Endothelial cell of umbilical vein (primary cell): ENCODE measurements at regions of chr19 and their contacts with region 1.

Region 1: DNA sequence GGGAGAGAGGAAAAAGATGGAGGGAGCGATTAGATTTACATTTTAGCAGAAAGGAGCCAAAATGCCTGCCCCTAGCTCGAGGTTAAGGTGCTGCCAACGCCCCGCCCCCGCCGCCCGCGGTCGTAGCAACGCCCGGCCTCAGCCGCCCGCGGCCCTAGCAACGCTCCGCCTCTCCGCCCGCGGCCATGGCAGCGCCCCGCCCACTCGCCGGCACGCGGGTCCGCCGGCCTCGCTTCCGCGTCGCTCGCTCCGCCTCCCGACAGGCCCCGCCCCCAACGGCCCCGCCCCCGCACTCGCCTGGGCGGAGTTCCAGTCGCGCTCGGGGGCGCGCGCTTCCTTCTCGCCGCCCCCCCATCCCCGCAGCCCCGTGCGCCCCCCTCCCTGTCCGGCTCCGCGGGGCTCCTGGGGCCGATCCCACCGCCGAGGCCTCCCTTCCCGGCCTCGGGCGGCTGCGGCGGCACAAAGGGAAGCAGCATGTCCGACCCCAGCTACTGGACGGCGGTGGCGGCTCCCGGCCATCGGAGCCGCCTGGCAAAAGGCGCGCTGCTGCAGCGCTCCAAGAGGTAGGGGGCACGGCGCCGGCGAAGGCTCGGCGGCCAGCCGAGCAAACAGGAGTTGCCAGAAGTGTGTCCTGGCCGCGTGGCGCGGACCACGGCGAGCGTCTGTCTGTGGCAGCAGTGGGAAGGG is 20.3 kb downstream of the MAST3 start:
- DNase-seq: peak; percentile 83
- H3K4me3 ChIP-seq: peak overlapping the region; percentile 33 to 63 (median 51)
- H3K27ac ChIP-seq: no peak overlapping the region
- H3K4me1 ChIP-seq: peaks cover 10% of the 10 kb centered on the region
- H3K27me3 ChIP-seq: no peaks in the 10 kb centered on the region
- CTCF ChIP-seq: peak in 1 of 2 donors; percentile 32
- POLR2A ChIP-seq: no peak

Region 2: GRCh38 chr19:17915951-17916593 is 201.8 kb before region 1 on chr19:
- CTCF ChIA-PET with region 1: no interaction called
- POLR2A ChIA-PET with region 1: no interaction called
- dilution Hi-C with region 1: no loop called
- intact Hi-C with region 1: no loop called
- DNase-seq: no peak
- H3K4me3 ChIP-seq: no peak overlapping the region
- H3K27ac ChIP-seq: no peak overlapping the region
- H3K4me1 ChIP-seq: no peaks in the 10 kb centered on the region
- H3K27me3 ChIP-seq: no peaks in the 10 kb centered on the region
- CTCF ChIP-seq: no peak
- POLR2A ChIP-seq: no peak

Region 3: DNA sequence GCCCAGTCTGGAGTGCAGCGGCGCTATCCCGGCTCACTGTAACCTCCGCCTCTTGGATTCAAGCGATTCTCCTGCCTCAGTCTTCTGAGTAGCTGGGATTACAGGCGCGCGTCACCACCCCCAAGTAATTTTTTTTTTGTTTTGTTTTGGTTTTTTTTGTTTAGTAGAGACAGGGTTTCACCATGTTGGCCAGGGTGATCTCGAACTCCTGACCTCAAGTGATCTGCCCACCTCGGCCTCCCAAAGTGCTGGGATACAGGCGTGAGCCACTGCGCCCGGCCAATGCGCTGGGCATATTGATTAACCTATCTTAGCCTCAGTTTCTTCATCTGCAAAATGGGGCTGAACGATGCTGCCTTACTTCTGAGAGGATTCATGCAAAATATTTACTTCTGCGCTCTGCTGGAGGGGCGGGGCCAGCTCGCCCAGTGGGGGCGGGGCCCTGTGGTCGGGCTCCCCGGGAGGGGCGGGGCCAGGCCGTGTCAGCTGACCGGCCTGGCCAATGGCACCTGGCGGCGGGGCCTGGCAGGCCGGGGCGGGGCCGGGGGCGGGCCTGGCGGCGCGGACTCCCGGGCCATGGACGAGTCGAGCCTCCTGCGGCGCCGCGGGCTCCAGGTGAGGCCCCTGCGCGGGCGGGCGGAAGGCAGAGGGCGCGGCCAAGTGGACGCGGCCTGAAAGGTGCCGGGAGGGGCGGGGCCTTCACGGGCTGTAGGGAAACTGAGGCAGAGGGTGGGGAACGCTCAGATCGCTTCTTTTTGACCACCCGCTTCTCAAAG is 20.4 kb before region 1 on chr19 and contains the start of gene MAST3:
- CTCF ChIA-PET with region 1: interaction called, 22 read pairs
- POLR2A ChIA-PET with region 1: no interaction called
- dilution Hi-C with region 1: no loop called
- intact Hi-C with region 1: no loop called
- DNase-seq: peak; percentile 66
- H3K4me3 ChIP-seq: peak within 1 kb of the TSS; percentile 24 to 54 (median 28)
- H3K27ac ChIP-seq: no peak within 1 kb of the TSS
- H3K4me1 ChIP-seq: peaks cover 5% of the 10 kb centered on the region
- H3K27me3 ChIP-seq: peaks cover 19 to 20% of the 10 kb centered on the region in 2 experiments
- CTCF ChIP-seq: no peak
- POLR2A ChIP-seq: no peak
- total RNA-seq, gene MAST3: 2.7 and 4.2 TPM in 2 replicates

Region 4: DNA sequence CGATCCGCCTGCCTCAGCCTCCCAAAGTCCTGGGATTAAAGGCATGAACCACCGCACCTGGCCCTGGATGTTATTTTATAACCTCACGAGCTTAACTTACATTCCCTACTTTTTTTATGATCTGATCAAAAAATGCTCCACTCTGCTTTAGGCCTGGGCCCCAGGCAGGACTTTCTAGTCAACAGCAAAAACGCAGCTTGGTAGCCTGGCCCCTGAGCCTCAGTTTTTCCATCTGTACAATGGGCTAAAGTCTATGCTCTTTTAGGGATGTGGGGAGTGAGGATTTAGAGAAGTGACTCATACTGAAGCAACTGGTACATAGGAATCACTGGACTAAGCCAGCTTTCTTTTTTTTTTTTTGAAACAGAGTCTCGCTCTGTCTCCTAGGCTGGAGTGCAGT is 23.2 kb after region 1 on chr19:
- CTCF ChIA-PET with region 1: interaction called, 17 read pairs
- POLR2A ChIA-PET with region 1: no interaction called
- dilution Hi-C with region 1: no loop called
- intact Hi-C with region 1: no loop called
- DNase-seq: no peak
- H3K4me3 ChIP-seq: no peak overlapping the region
- H3K27ac ChIP-seq: no peak overlapping the region
- H3K4me1 ChIP-seq: no peaks in the 10 kb centered on the region
- H3K27me3 ChIP-seq: no peaks in the 10 kb centered on the region
- CTCF ChIP-seq: no peak
- POLR2A ChIP-seq: no peak

Region 5: GRCh38 chr19:18167975-18168645 is 50.3 kb after region 1 on chr19:
- CTCF ChIA-PET with region 1: interaction called, 138 read pairs
- POLR2A ChIA-PET with region 1: no interaction called
- dilution Hi-C with region 1: no loop called
- intact Hi-C with region 1: loop called (anchors 1 kb)
- DNase-seq: peak; percentile 24
- H3K4me3 ChIP-seq: no peak overlapping the region
- H3K27ac ChIP-seq: no peak overlapping the region
- H3K4me1 ChIP-seq: no peaks in the 10 kb centered on the region
- H3K27me3 ChIP-seq: no peaks in the 10 kb centered on the region
- CTCF ChIP-seq: peak; percentile 63 to 84
- POLR2A ChIP-seq: no peak

Region 6: GRCh38 chr19:18192673-18193387 is 75.0 kb after region 1 on chr19 and contains the start of gene MPV17L2:
- CTCF ChIA-PET with region 1: interaction called, 29 read pairs
- POLR2A ChIA-PET with region 1: no interaction called
- dilution Hi-C with region 1: no loop called
- intact Hi-C with region 1: loop called (anchors 1 kb)
- DNase-seq: peak; percentile 100
- H3K4me3 ChIP-seq: peak within 1 kb of the TSS; percentile 78 to 85 (median 82)
- H3K27ac ChIP-seq: peak within 1 kb of the TSS; percentile 56
- H3K4me1 ChIP-seq: peaks cover 14% of the 10 kb centered on the region
- H3K27me3 ChIP-seq: no peaks in the 10 kb centered on the region
- CTCF ChIP-seq: no peak
- POLR2A ChIP-seq: peak; percentile 66
- total RNA-seq, gene MPV17L2: 13.8 and 16.1 TPM in 2 replicates

Region 7: GRCh38 chr19:18322759-18323460 is 205.1 kb after region 1 on chr19 and contains the start of gene LSM4:
- CTCF ChIA-PET with region 1: interaction called, 6 read pairs
- POLR2A ChIA-PET with region 1: no interaction called
- dilution Hi-C with region 1: no loop called
- intact Hi-C with region 1: loop called (anchors 10 kb)
- DNase-seq: peak; percentile 98
- H3K4me3 ChIP-seq: peak within 1 kb of the TSS; percentile 43 to 76 (median 71)
- H3K27ac ChIP-seq: peak within 1 kb of the TSS; percentile 73
- H3K4me1 ChIP-seq: peaks cover 50% of the 10 kb centered on the region
- H3K27me3 ChIP-seq: no peaks in the 10 kb centered on the region
- CTCF ChIP-seq: peak; percentile 5 to 38
- POLR2A ChIP-seq: no peak
- total RNA-seq, gene LSM4: 103 and 118 TPM in 2 replicates

Region 8: GRCh38 chr19:18571564-18572300 is 453.9 kb after region 1 on chr19 and contains the start of gene UBA52:
- CTCF ChIA-PET with region 1: no interaction called
- POLR2A ChIA-PET with region 1: no interaction called
- dilution Hi-C with region 1: no loop called
- intact Hi-C with region 1: no loop called
- DNase-seq: peak; percentile 98
- H3K4me3 ChIP-seq: peak within 1 kb of the TSS; percentile 66 to 91 (median 68)
- H3K27ac ChIP-seq: peak within 1 kb of the TSS; percentile 60
- H3K4me1 ChIP-seq: peaks cover 16% of the 10 kb centered on the region
- H3K27me3 ChIP-seq: no peaks in the 10 kb centered on the region
- CTCF ChIP-seq: no peak
- POLR2A ChIP-seq: peak; percentile 92
- total RNA-seq, gene UBA52: 1,218 and 1,221 TPM in 2 replicates